Psoas muscle (tissue), 8 donors: ENCODE measurements at regions of chr21 and their contacts with region 1.

Region 1: GRCh38 chr21:37366482-37367316 is at the start of gene DYRK1A:
- DNase-seq: peak; percentile 99
- ATAC-seq: peak; percentile 89 to 93 (median 90)
- H3K4me3 ChIP-seq: peak within 1 kb of the TSS; percentile 83
- H3K27ac ChIP-seq: peak within 1 kb of the TSS; percentile 99
- H3K4me1 ChIP-seq: peaks cover 39% of the 10 kb centered on the region
- H3K27me3 ChIP-seq: no peaks in the 10 kb centered on the region
- CTCF ChIP-seq: no peak
- total RNA-seq, gene DYRK1A: 79.9 to 105 (median 89.3) TPM

Region 2: DNA sequence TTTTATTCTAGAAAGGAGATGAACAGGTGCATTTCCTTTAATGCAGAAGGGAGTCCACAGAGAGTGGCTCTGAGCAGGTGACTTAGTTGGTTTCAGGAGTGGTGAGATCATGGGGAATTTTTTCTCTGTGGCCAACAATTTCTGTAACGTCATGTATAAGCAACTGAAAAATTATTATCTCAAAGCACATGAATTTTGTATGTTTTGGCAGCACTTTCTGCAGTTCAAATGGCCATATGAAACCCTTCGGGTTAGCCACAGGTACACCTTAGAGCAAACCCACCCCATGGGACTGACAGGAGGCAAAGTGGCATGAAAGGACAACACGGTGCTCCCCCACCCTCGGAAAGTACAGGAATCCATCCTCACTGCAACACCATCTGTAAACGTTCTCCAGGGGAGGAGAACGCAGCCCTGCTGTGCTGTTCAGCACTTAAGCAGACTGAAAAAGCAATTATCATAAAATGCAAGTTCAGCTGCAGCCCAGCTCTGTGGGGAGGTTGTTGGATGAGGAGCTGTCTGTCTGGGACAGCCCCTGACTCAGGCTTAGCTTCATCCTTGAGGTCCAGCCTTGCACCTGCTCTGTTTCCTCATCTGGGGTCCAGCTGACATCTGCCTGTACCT is 831.0 kb before region 1 on chr21:
- intact Hi-C with region 1: no loop called
- DNase-seq: no peak
- ATAC-seq: no peak
- H3K4me3 ChIP-seq: no peak overlapping the region
- H3K27ac ChIP-seq: no peak overlapping the region
- H3K4me1 ChIP-seq: no peaks in the 10 kb centered on the region
- H3K27me3 ChIP-seq: peaks cover 0 to 28% (median 2%) of the 10 kb centered on the region in 3 donors
- CTCF ChIP-seq: no peak

Region 3: DNA sequence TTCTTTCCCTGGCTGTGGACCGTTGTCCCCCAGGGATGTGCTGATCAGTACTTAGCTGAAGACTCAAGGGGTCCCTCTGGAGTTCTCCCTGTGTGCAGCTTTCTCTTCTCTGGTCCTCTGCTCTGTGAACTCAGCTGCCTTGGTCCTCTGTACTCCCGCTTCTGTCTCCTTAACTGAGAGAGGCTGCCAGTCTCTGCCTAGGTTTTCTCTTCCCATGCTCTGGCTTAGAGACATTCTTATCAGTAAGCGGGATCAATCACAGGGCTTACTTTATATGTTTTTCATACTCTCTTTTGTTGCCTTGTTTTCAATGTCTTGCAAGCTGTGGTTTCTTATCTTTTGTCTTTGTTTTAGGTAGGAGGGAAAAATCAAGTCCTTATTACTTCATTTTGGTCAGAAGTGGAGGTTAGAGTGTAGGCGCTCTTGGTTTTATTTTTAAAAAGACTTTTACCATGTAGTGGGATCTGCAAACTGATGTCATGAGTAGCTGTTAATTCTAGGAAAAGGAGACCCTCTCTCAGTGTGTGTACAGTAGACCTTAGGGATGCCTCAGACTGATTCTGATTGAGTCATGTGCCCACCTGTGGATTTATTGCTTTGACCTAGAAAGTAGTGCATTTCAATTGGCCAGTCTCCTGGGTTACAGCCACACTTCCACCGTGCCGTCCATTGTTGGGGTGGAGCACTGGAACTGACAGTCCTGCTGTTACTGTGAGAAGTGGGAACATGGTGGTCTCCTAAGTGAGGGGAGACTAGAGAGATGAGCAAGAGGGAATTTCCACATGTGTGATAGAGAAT is 247.1 kb before region 1 on chr21:
- intact Hi-C with region 1: no loop called
- DNase-seq: no peak
- ATAC-seq: no peak
- H3K4me3 ChIP-seq: no peak overlapping the region
- H3K27ac ChIP-seq: no peak overlapping the region
- H3K4me1 ChIP-seq: no peaks in the 10 kb centered on the region
- H3K27me3 ChIP-seq: no peaks in the 10 kb centered on the region
- CTCF ChIP-seq: no peak

Region 4: GRCh38 chr21:37220981-37221664 is 145.6 kb before region 1 on chr21:
- intact Hi-C with region 1: loop called (anchors 2 to 5 kb)
- DNase-seq: peak; percentile 95 to 97
- ATAC-seq: peak; percentile 93 to 97 (median 94)
- H3K4me3 ChIP-seq: peak overlapping the region; percentile 78
- H3K27ac ChIP-seq: peak overlapping the region; percentile 83
- H3K4me1 ChIP-seq: peaks cover 8% of the 10 kb centered on the region
- H3K27me3 ChIP-seq: no peaks in the 10 kb centered on the region
- CTCF ChIP-seq: no peak

Region 5: GRCh38 chr21:37267269-37268184 is 99.2 kb before region 1 on chr21 and contains the start of gene VPS26C:
- intact Hi-C with region 1: loop called (anchors 1 to 2 kb)
- DNase-seq: peak; percentile 98 to 99
- ATAC-seq: peak; percentile 91 to 94 (median 93)
- H3K4me3 ChIP-seq: peak within 1 kb of the TSS; percentile 96
- H3K27ac ChIP-seq: peak within 1 kb of the TSS; percentile 95
- H3K4me1 ChIP-seq: peaks cover 40% of the 10 kb centered on the region
- H3K27me3 ChIP-seq: no peaks in the 10 kb centered on the region
- CTCF ChIP-seq: no peak
- total RNA-seq, gene VPS26C: 32.7 to 58.4 (median 46.8) TPM

Region 6: DNA sequence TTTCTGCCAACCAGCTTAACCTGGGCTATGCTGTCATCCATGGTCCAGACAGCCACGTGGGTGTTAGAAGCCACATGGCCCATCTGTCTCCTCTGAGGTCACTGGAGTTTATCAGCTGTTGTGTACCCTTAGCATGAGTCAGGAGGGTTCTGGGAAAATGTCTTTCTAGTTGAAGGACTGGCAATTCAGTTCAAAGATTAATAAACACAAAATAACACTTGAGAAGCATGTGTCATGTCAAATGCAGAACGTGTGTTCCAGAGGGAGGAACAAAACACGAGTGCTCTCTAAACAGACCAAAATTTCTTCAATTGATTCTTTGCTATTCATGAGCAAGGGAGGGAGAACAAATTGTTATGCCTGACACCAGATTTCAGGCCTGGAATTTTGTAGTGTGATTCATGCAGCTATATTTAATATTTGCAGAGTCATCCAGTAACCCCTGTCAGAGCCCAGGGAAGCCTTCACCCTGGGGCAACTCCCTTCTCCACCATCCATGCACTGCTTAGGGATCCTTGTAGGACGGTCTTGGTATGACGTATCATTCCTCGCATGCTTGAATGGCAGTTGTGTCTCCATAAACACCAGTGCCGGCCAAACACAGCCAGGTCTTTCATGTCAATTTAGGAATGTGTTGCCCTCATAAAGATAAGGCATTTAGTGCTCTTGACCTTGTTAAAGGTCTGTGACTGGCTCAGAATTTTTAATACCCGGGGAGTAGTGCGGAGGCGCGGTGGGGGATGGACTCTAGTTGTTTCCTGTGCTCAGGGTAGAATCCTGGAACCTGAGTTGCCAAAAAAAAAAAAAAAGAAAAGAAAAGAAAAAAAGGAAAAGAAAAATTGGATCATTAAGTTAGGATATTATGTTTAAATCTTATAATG is 27.8 kb before region 1 on chr21:
- intact Hi-C with region 1: loop called in 1 of 2 experiments (anchors 1 kb)
- DNase-seq: peak; percentile 49 to 78
- ATAC-seq: peak; percentile 97 to 99 (median 98)
- H3K4me3 ChIP-seq: peak overlapping the region; percentile 37
- H3K27ac ChIP-seq: peak overlapping the region; percentile 90
- H3K4me1 ChIP-seq: peaks cover 4% of the 10 kb centered on the region
- H3K27me3 ChIP-seq: no peaks in the 10 kb centered on the region
- CTCF ChIP-seq: no peak

Region 7: DNA sequence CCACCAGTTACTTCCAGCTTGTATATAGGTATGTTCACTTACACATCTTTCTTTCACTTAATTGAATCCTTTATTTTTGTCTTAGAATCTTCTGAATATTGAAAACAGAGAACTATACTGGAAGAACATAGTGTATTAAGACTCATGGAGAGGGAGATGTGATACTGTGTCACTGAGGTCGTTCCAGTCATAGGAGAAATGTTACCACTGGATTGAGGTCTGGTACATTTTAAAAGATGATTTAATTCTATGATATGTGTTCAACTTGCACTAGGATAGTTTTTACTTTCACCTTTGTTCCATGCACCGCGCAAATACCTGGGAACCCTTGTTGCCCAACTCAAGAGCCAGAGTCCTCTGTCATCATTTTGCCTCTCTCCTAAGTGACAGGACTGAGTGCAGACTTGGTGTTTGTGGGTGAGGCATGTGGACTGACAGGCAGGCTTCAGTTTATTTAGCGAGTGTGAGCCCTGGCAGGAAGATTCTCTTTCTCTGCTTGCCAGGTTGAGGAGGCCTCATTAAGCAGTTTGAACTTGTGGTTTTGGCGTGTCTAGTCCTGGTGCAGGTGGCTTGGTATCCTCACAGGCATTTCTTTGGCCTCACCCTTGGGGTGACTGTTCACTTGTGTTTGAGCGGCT is 63.6 kb after region 1 on chr21:
- intact Hi-C with region 1: loop called in 1 of 2 experiments (anchors 2 kb)
- DNase-seq: no peak
- ATAC-seq: peak; percentile 72 to 84 (median 80)
- H3K4me3 ChIP-seq: peak overlapping the region; percentile 26
- H3K27ac ChIP-seq: peak overlapping the region; percentile 78
- H3K4me1 ChIP-seq: peaks cover 71% of the 10 kb centered on the region
- H3K27me3 ChIP-seq: no peaks in the 10 kb centered on the region
- CTCF ChIP-seq: no peak

Region 8: GRCh38 chr21:37557261-37557950 is 190.7 kb after region 1 on chr21:
- intact Hi-C with region 1: loop called (anchors 5 to 10 kb)
- DNase-seq: no peak
- ATAC-seq: no peak
- H3K4me3 ChIP-seq: no peak overlapping the region
- H3K27ac ChIP-seq: peak overlapping the region; percentile 89
- H3K4me1 ChIP-seq: peaks cover 31% of the 10 kb centered on the region
- H3K27me3 ChIP-seq: no peaks in the 10 kb centered on the region
- CTCF ChIP-seq: no peak

Region 9: DNA sequence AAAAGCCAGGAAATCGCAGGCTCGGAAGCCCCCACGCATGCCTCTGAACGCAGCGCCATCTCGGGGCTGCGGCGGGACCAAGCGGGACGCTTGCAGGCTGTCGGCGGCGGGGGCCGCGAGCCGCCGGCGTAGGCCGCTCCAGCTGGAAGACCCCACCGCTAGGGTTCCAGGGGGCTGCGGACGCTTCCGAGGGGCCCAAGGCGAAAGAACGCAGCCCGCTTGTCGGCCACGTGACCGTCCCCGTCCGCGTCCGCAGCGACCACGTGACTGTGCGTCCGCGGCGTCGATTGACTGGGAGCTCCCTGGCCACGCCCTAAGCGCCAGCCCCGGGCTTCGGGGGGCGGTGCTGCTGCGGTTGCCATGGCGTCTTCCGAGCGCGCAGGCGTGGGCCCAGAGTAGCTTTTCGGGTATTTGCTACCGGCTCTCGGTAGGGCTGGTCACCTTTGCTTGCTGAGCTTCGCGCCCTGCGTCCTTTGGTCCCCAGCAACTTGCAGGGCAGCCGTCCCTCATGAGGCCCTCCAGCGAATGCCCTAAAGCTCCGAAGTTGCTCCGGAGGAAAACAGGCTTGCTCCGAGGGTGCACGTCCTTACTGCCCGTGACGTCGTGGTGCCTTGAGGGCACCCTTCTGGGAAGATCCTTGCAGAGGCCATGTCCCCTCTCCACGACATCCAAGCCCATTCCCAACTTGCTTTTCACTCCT is 197.1 kb after region 1 on chr21:
- intact Hi-C with region 1: loop called (anchors 5 to 10 kb)
- DNase-seq: peak; percentile 94 to 97
- ATAC-seq: peak; percentile 82 to 90 (median 88)
- H3K4me3 ChIP-seq: peak overlapping the region; percentile 87
- H3K27ac ChIP-seq: peak overlapping the region; percentile 97
- H3K4me1 ChIP-seq: peaks cover 30% of the 10 kb centered on the region
- H3K27me3 ChIP-seq: no peaks in the 10 kb centered on the region
- CTCF ChIP-seq: peak; percentile 52